ENCODE measurements at regions of chr6 and their contacts with region 1.

Region 1: DNA sequence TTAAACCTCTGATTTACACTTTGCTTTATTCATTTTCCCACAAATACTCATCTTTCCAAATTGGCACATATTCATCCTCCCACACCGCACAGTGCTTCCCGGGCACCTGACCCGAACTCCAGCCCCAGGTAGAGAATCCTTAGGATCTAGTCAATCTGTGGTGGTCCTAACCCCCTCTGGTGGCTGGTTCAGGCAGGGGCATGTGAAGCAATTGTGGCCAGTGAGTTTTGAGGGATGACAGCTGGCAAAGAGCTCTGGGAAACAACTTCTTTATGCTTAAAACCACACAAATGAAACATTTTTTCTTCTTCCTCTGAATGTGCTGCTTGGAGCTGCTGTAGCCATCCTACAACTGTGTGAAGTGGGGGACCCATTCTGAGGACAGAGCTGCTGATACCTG is 54.7 kb downstream of the ELOVL5 start:
- DNase-seq: no peak
- H3K4me3 Mint-ChIP-seq: no peak overlapping the region
- H3K27ac Mint-ChIP-seq: no peak overlapping the region
- H3K4me1 Mint-ChIP-seq: peaks cover 47% of the 10 kb centered on the region
- H3K27me3 Mint-ChIP-seq: no peaks in the 10 kb centered on the region

Region 2: GRCh38 chr6:53410508-53411258 is 116.6 kb after region 1 on chr6:
- intact Hi-C with region 1: loop called (anchors 5 kb)
- DNase-seq: peak; percentile 29
- H3K4me3 Mint-ChIP-seq: no peak overlapping the region
- H3K27ac Mint-ChIP-seq: no peak overlapping the region
- H3K4me1 Mint-ChIP-seq: peaks cover 5% of the 10 kb centered on the region
- H3K27me3 Mint-ChIP-seq: peaks cover 6% of the 10 kb centered on the region

Measured in activated T-helper 2 cell treated with anti-CD3 and anti-CD28 coated beads, Interferon-gamma antibody, Interleukin-2, Interleukin-4, amounts not matched to agents 10 μg/mL and 5 μg/mL and 100 μg/mL, durations not matched to agents 14 hours and 24 hours and 36 hours (primary cell).